MCF 10A (cell line): ENCODE measurements at regions of chr4 and their contacts with region 1.

Region 1: GRCh38 chr4:41692717-41693345 is 55.7 kb downstream of the PHOX2B start:
- DNase-seq: peak; percentile 68
- H3K4me3 Mint-ChIP-seq: no peak overlapping the region
- H3K27ac Mint-ChIP-seq: peak overlapping the region; percentile 65
- H3K4me1 Mint-ChIP-seq: peaks cover 12% of the 10 kb centered on the region
- H3K27me3 Mint-ChIP-seq: no peaks in the 10 kb centered on the region
- CTCF ChIP-seq: peak; percentile 91

Region 2: GRCh38 chr4:41160012-41160789 is 532.6 kb before region 1 on chr4:
- CTCF ChIA-PET with region 1: no interaction called
- POLR2A ChIA-PET with region 1: no interaction called
- intact Hi-C with region 1: no loop called
- DNase-seq: peak; percentile 97
- H3K4me3 Mint-ChIP-seq: peak overlapping the region; percentile 61
- H3K27ac Mint-ChIP-seq: peak overlapping the region; percentile 94
- H3K4me1 Mint-ChIP-seq: peaks cover 62% of the 10 kb centered on the region
- H3K27me3 Mint-ChIP-seq: no peaks in the 10 kb centered on the region
- CTCF ChIP-seq: no peak

Region 3: GRCh38 chr4:41281038-41281634 is 411.7 kb before region 1 on chr4:
- CTCF ChIA-PET with region 1: interaction called, 3 read pairs
- POLR2A ChIA-PET with region 1: interaction called, 3 read pairs
- intact Hi-C with region 1: loop called (anchors 1 kb)
- DNase-seq: peak; percentile 91
- H3K4me3 Mint-ChIP-seq: no peak overlapping the region
- H3K27ac Mint-ChIP-seq: no peak overlapping the region
- H3K4me1 Mint-ChIP-seq: no peaks in the 10 kb centered on the region
- H3K27me3 Mint-ChIP-seq: no peaks in the 10 kb centered on the region
- CTCF ChIP-seq: peak; percentile 83

Region 4: DNA sequence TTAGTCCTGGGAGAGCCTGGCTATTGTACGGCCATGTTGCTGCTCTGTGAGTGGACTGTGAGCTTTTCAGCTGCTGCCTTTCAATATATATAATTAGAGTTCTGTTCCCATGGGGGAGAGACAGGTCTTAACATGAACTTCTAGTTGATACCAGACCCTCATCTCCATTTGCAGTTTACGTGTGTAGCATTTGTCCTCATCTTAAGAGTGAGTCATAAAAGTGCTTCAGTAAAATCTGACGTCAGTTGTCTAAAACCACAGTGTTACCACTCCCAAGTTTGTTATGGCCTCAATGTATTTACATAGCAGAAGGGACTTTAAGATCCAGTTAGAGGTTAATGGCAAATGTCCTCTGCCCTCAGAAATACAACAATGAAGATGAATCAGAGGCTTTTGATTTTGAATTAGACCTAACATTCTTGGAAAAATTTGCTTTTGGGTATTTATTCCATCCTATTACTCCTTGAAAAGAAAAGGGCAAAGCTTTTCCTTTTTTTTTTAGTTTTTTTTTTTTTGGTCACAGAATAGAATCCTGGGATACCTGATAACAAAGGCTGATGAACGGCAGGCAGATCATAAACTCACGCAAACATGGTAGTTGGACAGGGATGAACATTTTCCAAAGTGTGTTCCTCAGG is 17.1 kb after region 1 on chr4:
- CTCF ChIA-PET with region 1: interaction called, 8 read pairs
- POLR2A ChIA-PET with region 1: interaction called, 24 read pairs
- intact Hi-C with region 1: no loop called
- DNase-seq: peak; percentile 96
- H3K4me3 Mint-ChIP-seq: no peak overlapping the region
- H3K27ac Mint-ChIP-seq: peak overlapping the region; percentile 89
- H3K4me1 Mint-ChIP-seq: peaks cover 34% of the 10 kb centered on the region
- H3K27me3 Mint-ChIP-seq: no peaks in the 10 kb centered on the region
- CTCF ChIP-seq: no peak

Region 5: DNA sequence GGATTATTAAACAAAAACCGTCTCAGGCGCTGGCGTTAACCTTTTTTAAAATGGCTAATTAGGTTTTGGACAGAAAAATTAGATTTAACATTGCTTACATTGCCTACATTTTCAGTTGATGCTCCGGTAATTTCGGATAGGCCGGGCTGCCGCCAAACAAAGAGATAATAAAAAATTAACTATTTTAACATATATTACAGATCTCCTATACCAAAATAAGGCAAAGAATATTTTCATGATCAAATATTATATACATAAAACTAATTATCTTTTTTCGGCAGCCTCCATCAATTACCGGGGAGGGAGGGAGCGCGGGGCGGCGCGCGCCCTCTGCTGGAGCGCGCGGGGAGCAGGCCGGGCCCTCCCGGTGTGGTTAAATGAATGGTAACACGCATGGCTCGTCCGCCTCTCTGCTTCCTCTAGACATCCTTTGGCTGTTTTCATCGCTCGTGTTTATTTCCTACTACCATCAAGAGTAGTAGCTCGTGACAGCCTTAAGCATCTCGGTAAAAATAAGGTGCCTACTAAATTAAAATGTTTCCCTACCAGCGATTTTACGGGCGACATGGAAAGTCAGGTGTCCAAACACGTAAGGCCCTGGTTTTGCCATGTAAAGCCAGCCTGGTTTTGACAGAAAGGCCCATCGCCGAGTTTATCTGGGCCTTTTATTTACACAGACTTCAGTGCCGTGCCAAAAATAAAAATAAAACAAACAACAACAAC is 190.0 kb after region 1 on chr4:
- CTCF ChIA-PET with region 1: interaction called, 193 read pairs
- POLR2A ChIA-PET with region 1: interaction called, 74 read pairs
- intact Hi-C with region 1: loop called (anchors 1 kb)
- DNase-seq: peak; percentile 57
- H3K4me3 Mint-ChIP-seq: peak overlapping the region; percentile 65
- H3K27ac Mint-ChIP-seq: peak overlapping the region; percentile 65
- H3K4me1 Mint-ChIP-seq: peaks cover 15% of the 10 kb centered on the region
- H3K27me3 Mint-ChIP-seq: no peaks in the 10 kb centered on the region
- CTCF ChIP-seq: peak; percentile 88

Region 6: GRCh38 chr4:41934815-41935651 is 242.2 kb after region 1 on chr4 and contains the start of gene TMEM33:
- CTCF ChIA-PET with region 1: interaction called, 11 read pairs
- POLR2A ChIA-PET with region 1: interaction called, 32 read pairs
- intact Hi-C with region 1: no loop called
- DNase-seq: peak; percentile 96
- H3K4me3 Mint-ChIP-seq: peak within 1 kb of the TSS; percentile 81
- H3K27ac Mint-ChIP-seq: peak within 1 kb of the TSS; percentile 89
- H3K4me1 Mint-ChIP-seq: peaks cover 32% of the 10 kb centered on the region
- H3K27me3 Mint-ChIP-seq: no peaks in the 10 kb centered on the region
- CTCF ChIP-seq: no peak
- total RNA-seq, gene TMEM33: 101 and 117 TPM in 2 replicates

Region 7: GRCh38 chr4:42282081-42282901 is 589.5 kb after region 1 on chr4:
- CTCF ChIA-PET with region 1: interaction called, 4 read pairs
- POLR2A ChIA-PET with region 1: no interaction called
- intact Hi-C with region 1: loop called (anchors 1 kb)
- DNase-seq: peak; percentile 86
- H3K4me3 Mint-ChIP-seq: no peak overlapping the region
- H3K27ac Mint-ChIP-seq: no peak overlapping the region
- H3K4me1 Mint-ChIP-seq: no peaks in the 10 kb centered on the region
- H3K27me3 Mint-ChIP-seq: no peaks in the 10 kb centered on the region
- CTCF ChIP-seq: peak; percentile 82